Dorsolateral prefrontal cortex (tissue), 120 donors: ENCODE measurements at regions of chr14 and their contacts with region 1.

Region 1: GRCh38 chr14:76956316-76957090 is 72.0 kb downstream of the IRF2BPL start:
- DNase-seq: peak; percentile 80 to 95 (median 91)
- H3K4me3 ChIP-seq: peak overlapping the region; percentile 27 to 70 (median 52)
- H3K27ac ChIP-seq: peak overlapping the region; percentile 78 to 99 (median 97)
- H3K27me3 ChIP-seq: no peaks in the 10 kb centered on the region
- CTCF ChIP-seq: peak in 34 of 56 donors; percentile 10 to 53 (median 31)

Region 2: DNA sequence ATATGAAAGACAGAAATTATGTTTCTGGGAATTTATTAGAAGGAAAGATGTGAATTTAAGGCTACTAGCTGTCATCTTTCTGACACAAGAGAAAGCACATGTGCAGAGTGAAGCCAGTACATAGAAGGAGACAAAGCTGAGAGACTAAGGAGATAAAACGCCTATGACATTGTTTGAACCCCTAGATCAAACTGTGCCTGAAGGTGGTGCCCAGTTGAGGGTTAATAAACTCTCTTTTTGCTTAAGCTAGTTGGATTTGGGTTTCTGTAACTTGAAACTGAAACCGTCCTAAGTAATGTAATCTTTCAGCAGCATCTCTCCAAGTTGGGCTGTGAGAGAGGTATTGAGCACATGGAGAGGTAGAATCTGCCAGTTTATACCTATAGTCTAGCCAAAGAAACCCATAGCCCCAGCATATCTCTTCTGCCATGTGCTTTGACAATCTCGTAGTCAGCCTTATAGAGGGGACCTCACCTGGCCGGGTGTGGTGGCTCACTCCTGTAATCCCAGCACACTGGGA is 46.1 kb before region 1 on chr14:
- intact Hi-C with region 1: loop called in 1 of 2 experiments (anchors 5 kb)
- DNase-seq: no peak
- H3K4me3 ChIP-seq: no peak overlapping the region
- H3K27ac ChIP-seq: no peak overlapping the region
- H3K27me3 ChIP-seq: no peaks in the 10 kb centered on the region
- CTCF ChIP-seq: no peak

Region 3: GRCh38 chr14:77028384-77029231 is 72.1 kb after region 1 on chr14 and contains the start of gene IRF2BPL:
- intact Hi-C with region 1: loop called in 1 of 2 experiments (anchors 1 kb)
- DNase-seq: peak; percentile 96 to 98 (median 97)
- H3K4me3 ChIP-seq: peak within 1 kb of the TSS; percentile 49 to 94 (median 83)
- H3K27ac ChIP-seq: peak within 1 kb of the TSS; percentile 93 to 100 (median 100)
- H3K27me3 ChIP-seq: no peaks in the 10 kb centered on the region
- CTCF ChIP-seq: peak in 10 of 56 donors; percentile 7 to 35 (median 20)
- total RNA-seq, gene IRF2BPL: 30.1 to 62.8 (median 41.3) TPM

Region 4: GRCh38 chr14:77040059-77040740 is 83.7 kb after region 1 on chr14:
- intact Hi-C with region 1: loop called in 1 of 2 experiments (anchors 5 kb)
- DNase-seq: peak; percentile 93 to 99 (median 96)
- H3K4me3 ChIP-seq: peak overlapping the region in 58 of 59 donors; percentile 4 to 63 (median 44)
- H3K27ac ChIP-seq: peak overlapping the region; percentile 82 to 100 (median 98)
- H3K27me3 ChIP-seq: no peaks in the 10 kb centered on the region
- CTCF ChIP-seq: peak in 12 of 56 donors; percentile 15 to 38 (median 23)